ENCODE measurements at regions of chr22 and their contacts with region 1.

Region 1: GRCh38 chr22:21641789-21642583 is at the start of gene SDF2L1:
- DNase-seq: peak; percentile 94 to 99 (median 97)
- ATAC-seq: peak; percentile 96
- H3K4me3 ChIP-seq: peak within 1 kb of the TSS; percentile 87
- H3K4me3 Mint-ChIP-seq: peak within 1 kb of the TSS; percentile 73
- H3K27ac ChIP-seq: peak within 1 kb of the TSS; percentile 52 to 67
- H3K27ac Mint-ChIP-seq: peak within 1 kb of the TSS; percentile 42
- H3K4me1 ChIP-seq: peaks cover 32% of the 10 kb centered on the region
- H3K4me1 Mint-ChIP-seq: peaks cover 32% of the 10 kb centered on the region
- H3K27me3 ChIP-seq: no peaks in the 10 kb centered on the region
- H3K27me3 Mint-ChIP-seq: no peaks in the 10 kb centered on the region
- CTCF ChIP-seq: no peak
- total RNA-seq, gene SDF2L1: 20.0 to 21.2 TPM

Region 2: DNA sequence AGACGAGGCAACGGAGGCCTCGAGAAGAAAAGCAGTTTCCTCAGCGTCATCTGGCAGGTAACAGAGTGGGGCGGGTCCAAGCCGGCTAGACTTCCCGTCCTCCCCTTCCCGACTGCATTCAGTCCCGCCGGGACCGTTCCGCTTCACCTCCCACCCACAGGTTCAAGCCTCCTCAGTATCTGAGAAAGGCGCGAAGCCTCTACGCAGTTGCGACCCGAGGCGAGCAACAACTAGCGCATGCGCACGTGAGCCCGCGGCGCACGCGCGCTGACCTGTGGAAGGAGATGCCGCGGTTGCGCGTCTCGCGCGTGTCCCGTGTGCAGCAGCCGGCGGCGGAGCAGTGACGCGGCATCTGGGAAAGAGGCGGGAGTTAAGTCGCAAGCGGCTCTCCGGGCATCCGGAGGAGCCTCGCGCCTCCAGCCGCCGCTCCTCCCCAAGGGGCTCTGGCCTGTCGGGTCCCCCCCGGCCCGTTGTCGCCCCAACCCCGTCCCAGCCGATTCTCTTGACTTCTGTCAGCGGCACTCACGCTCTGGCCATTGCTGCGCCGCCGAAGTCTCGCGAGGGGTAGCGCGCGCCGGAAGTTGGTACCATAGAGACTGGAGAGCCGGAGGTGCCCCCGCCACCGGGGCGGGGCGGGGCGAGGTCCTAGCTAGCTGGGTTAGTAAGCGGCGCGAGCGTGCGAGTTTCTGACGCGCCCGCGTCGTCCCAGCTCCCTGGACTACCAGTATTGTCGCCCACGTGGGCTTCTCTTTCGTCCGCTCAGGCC is 640.2 kb before region 1 on chr22 and contains the start of gene THAP7:
- CTCF ChIA-PET with region 1: interaction called, 4 read pairs
- POLR2A ChIA-PET with region 1: interaction called, 4 read pairs
- intact Hi-C with region 1: loop called in 1 of 2 experiments (anchors 5 kb)
- DNase-seq: peak; percentile 94 to 99 (median 96)
- ATAC-seq: peak; percentile 87
- H3K4me3 ChIP-seq: peak within 1 kb of the TSS; percentile 82
- H3K4me3 Mint-ChIP-seq: peak within 1 kb of the TSS; percentile 93
- H3K27ac ChIP-seq: peak within 1 kb of the TSS; percentile 96 to 100
- H3K27ac Mint-ChIP-seq: peak within 1 kb of the TSS; percentile 97
- H3K4me1 ChIP-seq: peaks cover 54% of the 10 kb centered on the region
- H3K4me1 Mint-ChIP-seq: peaks cover 46% of the 10 kb centered on the region
- H3K27me3 ChIP-seq: no peaks in the 10 kb centered on the region
- H3K27me3 Mint-ChIP-seq: no peaks in the 10 kb centered on the region
- CTCF ChIP-seq: no peak
- total RNA-seq, gene THAP7: 82.7 to 84.0 TPM

Region 3: DNA sequence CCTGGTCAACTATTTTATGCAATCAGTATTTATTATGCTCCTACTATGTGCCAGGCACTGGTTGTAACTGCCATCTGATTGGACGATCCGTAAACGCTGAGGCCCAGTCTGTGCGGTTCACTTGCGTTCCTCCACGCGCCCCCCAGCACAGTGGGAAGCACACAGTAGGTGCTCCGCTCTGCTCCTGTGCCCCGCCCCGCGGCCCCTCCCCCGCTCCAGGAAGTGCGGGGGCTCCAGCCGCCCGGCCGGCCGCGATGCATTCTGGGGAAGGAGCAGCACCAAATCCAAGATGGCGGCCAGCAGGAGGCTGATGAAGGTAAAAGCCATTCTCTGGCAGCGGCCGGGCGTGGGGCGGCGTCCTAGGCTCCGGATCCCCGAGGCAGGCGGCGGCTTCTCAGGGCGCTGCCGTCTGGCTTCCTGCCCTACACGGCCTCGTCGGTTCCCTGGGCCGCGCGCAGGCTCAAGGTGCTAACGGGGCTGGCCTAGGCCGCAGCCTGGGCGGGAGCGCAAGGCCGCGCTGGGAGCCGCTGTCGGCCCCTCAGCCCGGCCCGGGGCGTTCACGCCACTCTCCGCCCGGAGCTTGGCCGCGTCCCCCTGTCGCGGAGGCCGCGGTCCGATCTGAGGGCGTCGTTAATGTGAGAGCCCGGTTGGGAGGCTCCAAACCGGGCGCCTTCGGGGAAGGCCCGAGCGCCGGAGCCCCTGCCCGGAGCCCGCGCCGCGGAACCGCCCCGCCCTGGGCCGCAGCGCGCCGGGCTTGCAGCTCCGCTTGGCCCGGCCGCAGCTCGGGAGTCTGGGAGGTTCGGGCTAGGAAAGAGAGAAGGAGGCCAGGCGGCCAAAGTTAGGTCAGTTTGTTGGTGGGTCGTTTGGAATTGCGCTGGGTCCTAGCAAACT is 74.3 kb before region 1 on chr22 and contains the start of gene UBE2L3:
- CTCF ChIA-PET with region 1: no interaction called
- POLR2A ChIA-PET with region 1: interaction called, 7 read pairs
- intact Hi-C with region 1: loop called in 1 of 2 experiments (anchors 5 kb)
- DNase-seq: peak; percentile 71 to 91 (median 79)
- ATAC-seq: peak; percentile 85
- H3K4me3 ChIP-seq: peak within 1 kb of the TSS; percentile 73
- H3K4me3 Mint-ChIP-seq: peak within 1 kb of the TSS; percentile 90
- H3K27ac ChIP-seq: peak within 1 kb of the TSS; percentile 53 to 59
- H3K27ac Mint-ChIP-seq: peak within 1 kb of the TSS; percentile 93
- H3K4me1 ChIP-seq: peaks cover 47% of the 10 kb centered on the region
- H3K4me1 Mint-ChIP-seq: peaks cover 44% of the 10 kb centered on the region
- H3K27me3 ChIP-seq: no peaks in the 10 kb centered on the region
- H3K27me3 Mint-ChIP-seq: no peaks in the 10 kb centered on the region
- CTCF ChIP-seq: no peak
- total RNA-seq, gene UBE2L3: 18.7 TPM

Region 4: GRCh38 chr22:21652010-21652546 is 10.1 kb after region 1 on chr22:
- CTCF ChIA-PET with region 1: interaction called, 7 read pairs
- POLR2A ChIA-PET with region 1: interaction called, 32 read pairs
- intact Hi-C with region 1: loop called in 1 of 2 experiments (anchors 2 kb)
- DNase-seq: peak; percentile 61 to 89 (median 74)
- ATAC-seq: peak; percentile 98
- H3K4me3 ChIP-seq: peak overlapping the region; percentile 65
- H3K4me3 Mint-ChIP-seq: peak overlapping the region; percentile 87
- H3K27ac ChIP-seq: no peak overlapping the region
- H3K27ac Mint-ChIP-seq: no peak overlapping the region
- H3K4me1 ChIP-seq: peaks cover 32% of the 10 kb centered on the region
- H3K4me1 Mint-ChIP-seq: peaks cover 33% of the 10 kb centered on the region
- H3K27me3 ChIP-seq: no peaks in the 10 kb centered on the region
- H3K27me3 Mint-ChIP-seq: no peaks in the 10 kb centered on the region
- CTCF ChIP-seq: no peak

Region 5: DNA sequence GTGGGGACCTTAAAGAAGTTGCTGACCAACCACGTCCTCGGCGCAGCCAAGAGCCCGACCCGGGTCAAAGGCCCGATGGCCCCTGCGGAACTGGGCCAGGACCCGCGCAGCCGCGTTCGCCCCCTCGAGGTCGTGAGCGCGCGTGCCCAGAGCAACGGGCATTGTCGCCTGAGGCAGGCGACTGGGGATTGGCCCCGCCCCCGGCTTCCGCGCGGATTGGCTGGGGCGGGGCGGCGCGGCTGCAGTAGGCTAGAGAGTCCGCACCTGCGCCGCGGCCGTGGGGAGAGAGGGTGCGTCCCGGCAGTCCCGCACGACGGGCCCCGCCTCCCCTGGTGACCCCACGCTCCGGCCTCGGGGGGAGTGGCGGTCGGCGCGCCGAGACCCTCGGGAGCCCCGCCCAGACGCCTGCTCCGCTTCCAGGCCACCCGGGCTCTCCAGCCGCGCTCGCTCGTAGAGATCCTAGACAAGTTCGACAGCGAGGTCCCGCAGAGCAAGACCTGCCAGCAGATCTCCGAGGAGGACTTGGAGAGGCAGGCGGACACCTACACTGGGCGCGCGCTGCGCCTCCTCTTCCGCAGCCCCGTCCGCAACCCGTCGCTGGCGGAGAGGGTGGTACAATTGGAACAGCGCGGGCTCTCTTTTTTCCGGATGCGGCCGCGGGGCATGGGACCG is 15.5 kb after region 1 on chr22:
- CTCF ChIA-PET with region 1: interaction called, 7 read pairs
- POLR2A ChIA-PET with region 1: interaction called, 32 read pairs
- intact Hi-C with region 1: loop called in 1 of 2 experiments (anchors 2 kb)
- DNase-seq: peak in 13 of 14 experiments; percentile 58 to 90 (median 71)
- ATAC-seq: peak; percentile 97
- H3K4me3 ChIP-seq: peak overlapping the region; percentile 77
- H3K4me3 Mint-ChIP-seq: peak overlapping the region; percentile 82
- H3K27ac ChIP-seq: no peak overlapping the region
- H3K27ac Mint-ChIP-seq: no peak overlapping the region
- H3K4me1 ChIP-seq: peaks cover 24% of the 10 kb centered on the region
- H3K4me1 Mint-ChIP-seq: peaks cover 14% of the 10 kb centered on the region
- H3K27me3 ChIP-seq: no peaks in the 10 kb centered on the region
- H3K27me3 Mint-ChIP-seq: no peaks in the 10 kb centered on the region
- CTCF ChIP-seq: peak; percentile 50

Region 6: GRCh38 chr22:21681566-21682370 is 39.8 kb after region 1 on chr22:
- CTCF ChIA-PET with region 1: no interaction called
- POLR2A ChIA-PET with region 1: no interaction called
- intact Hi-C with region 1: no loop called
- DNase-seq: no peak
- ATAC-seq: no peak
- H3K4me3 ChIP-seq: no peak overlapping the region
- H3K4me3 Mint-ChIP-seq: no peak overlapping the region
- H3K27ac ChIP-seq: no peak overlapping the region
- H3K27ac Mint-ChIP-seq: no peak overlapping the region
- H3K4me1 ChIP-seq: no peaks in the 10 kb centered on the region
- H3K4me1 Mint-ChIP-seq: no peaks in the 10 kb centered on the region
- H3K27me3 ChIP-seq: no peaks in the 10 kb centered on the region
- H3K27me3 Mint-ChIP-seq: no peaks in the 10 kb centered on the region
- CTCF ChIP-seq: no peak

Measured in CD4-positive, alpha-beta T cell (primary cell).